A549 (cell line): ENCODE measurements at regions of chr19 and their contacts with region 1.

Region 1: DNA sequence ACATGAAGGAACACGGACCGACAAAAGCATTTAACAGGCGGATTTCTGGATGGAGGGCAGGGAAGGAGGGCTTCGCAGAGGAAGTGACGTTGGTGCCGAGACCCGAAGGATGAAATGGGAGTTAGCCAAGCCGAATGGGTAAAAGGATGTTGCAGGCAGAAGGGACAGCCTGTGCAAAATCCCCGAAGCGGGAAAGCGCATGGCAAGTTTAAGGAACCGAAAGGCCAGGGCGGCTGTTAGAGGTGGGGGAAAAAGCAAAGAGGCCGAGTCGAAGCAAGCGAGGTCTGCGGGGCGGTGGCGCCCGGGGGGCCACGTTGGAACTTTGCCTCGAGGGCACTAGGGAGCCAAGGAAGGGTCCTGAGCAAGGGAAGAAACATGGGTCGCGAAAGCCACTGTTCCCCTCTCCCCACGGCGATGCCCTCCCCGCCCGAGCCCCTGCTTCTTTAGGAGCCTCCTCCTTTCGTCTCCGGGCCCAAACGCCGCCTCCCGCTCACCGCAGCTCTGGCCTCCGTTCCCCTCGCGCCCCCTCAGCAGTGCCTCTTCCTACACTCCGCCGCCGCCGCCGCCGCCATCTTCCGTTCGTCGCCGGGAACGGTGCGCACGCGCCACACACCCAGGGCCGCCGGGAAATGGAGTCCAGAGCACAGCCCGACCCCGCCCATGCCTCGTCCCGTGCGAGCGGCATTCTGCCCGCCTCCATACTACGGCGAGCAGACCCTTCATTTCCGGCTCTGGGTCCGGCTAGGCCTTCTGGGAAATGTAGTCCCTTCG is at the start of gene SYMPK:
- DNase-seq: peak; percentile 99 to 100
- ATAC-seq: peak; percentile 92 to 96
- H3K4me3 ChIP-seq: peak within 1 kb of the TSS; percentile 71
- H3K27ac ChIP-seq: peak within 1 kb of the TSS; percentile 88
- H3K4me1 ChIP-seq: peaks cover 25% of the 10 kb centered on the region
- CTCF ChIP-seq: no peak
- EP300 ChIP-seq: no peak; a peak in 1 of 5 replicates
- POLR2A ChIP-seq: peak; percentile 59
- RAD21 ChIP-seq: no peak
- polyA plus RNA-seq, gene SYMPK: 92.6 and 105 TPM in 2 replicates

Region 2: GRCh38 chr19:45636902-45637301 is 225.8 kb before region 1 on chr19:
- CTCF ChIA-PET with region 1: no interaction called
- POLR2A ChIA-PET with region 1: no interaction called
- DNase-seq: no peak
- ATAC-seq: no peak
- H3K4me3 ChIP-seq: no peak overlapping the region
- H3K27ac ChIP-seq: no peak overlapping the region
- H3K4me1 ChIP-seq: peaks cover 36% of the 10 kb centered on the region
- CTCF ChIP-seq: no peak
- EP300 ChIP-seq: no peak
- POLR2A ChIP-seq: no peak
- RAD21 ChIP-seq: no peak

Region 3: DNA sequence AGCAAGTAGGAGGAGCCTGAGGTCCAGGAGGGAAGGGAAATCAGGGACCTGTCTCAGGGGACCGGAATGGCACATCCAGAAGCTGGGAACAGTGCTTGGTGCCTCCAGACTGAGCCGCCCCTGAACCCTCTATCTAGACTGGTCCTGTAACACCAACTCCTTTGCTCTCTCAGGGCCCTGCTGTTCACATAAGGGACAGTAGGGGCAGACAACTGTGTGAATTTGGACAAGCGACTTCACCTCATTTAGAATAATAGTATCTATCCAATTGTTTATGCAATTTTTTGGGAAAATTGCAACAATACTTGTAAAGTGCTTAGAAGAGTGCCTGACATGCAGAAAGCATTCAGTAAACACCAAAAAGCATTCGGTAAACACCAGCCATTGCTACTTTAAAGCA is 13.8 kb before region 1 on chr19:
- CTCF ChIA-PET with region 1: interaction called, 62 read pairs
- POLR2A ChIA-PET with region 1: interaction called, 6 read pairs
- DNase-seq: peak; percentile 48 to 69
- ATAC-seq: peak; percentile 72 to 84
- H3K4me3 ChIP-seq: no peak overlapping the region
- H3K27ac ChIP-seq: no peak overlapping the region
- H3K4me1 ChIP-seq: no peaks in the 10 kb centered on the region
- CTCF ChIP-seq: no peak
- EP300 ChIP-seq: no peak
- POLR2A ChIP-seq: no peak
- RAD21 ChIP-seq: no peak

Region 4: GRCh38 chr19:45895519-45895972 is 32.8 kb after region 1 on chr19:
- CTCF ChIA-PET with region 1: interaction called, 315 read pairs
- POLR2A ChIA-PET with region 1: interaction called, 4 read pairs
- DNase-seq: no peak
- ATAC-seq: no peak
- H3K4me3 ChIP-seq: no peak overlapping the region
- H3K27ac ChIP-seq: no peak overlapping the region
- H3K4me1 ChIP-seq: 0 out of 3 replicates have a peak, but pooled peaks cover under 1% of the 10 kb centered on the region
- CTCF ChIP-seq: no peak
- EP300 ChIP-seq: no peak
- POLR2A ChIP-seq: no peak
- RAD21 ChIP-seq: no peak

Region 5: GRCh38 chr19:45913874-45914830 is 51.4 kb after region 1 on chr19 and contains the start of gene NANOS2:
- CTCF ChIA-PET with region 1: no interaction called
- POLR2A ChIA-PET with region 1: no interaction called
- DNase-seq: peak in 1 of 2 experiments; percentile 64
- ATAC-seq: peak; percentile 25 to 78; a peak in 5 of 6 replicates
- H3K4me3 ChIP-seq: no peak within 1 kb of the TSS
- H3K27ac ChIP-seq: no peak within 1 kb of the TSS
- H3K4me1 ChIP-seq: no peaks in the 10 kb centered on the region
- CTCF ChIP-seq: peak; percentile 21; the same call in 1 of the 3 replicates
- EP300 ChIP-seq: no peak
- POLR2A ChIP-seq: no peak
- RAD21 ChIP-seq: peak; percentile 37 to 64; a peak in 4 of 5 replicates
- polyA plus RNA-seq, gene NANOS2: not detected in 2 replicates